ENCODE measurements at regions of chr9 and their contacts with region 1.

Region 1: GRCh38 chr9:132575005-132575609 is 7.3 kb upstream of the BARHL1 start:
- DNase-seq: peak; percentile 87
- H3K4me3 ChIP-seq: no peak overlapping the region
- H3K27ac ChIP-seq: no peak overlapping the region
- H3K4me1 ChIP-seq: peaks cover 0 to 7% (median 0%) of the 10 kb centered on the region in 6 donors
- H3K27me3 ChIP-seq: peaks cover 0 to 79% (median 26%) of the 10 kb centered on the region in 7 donors
- CTCF ChIP-seq: peak; percentile 31 to 81 (median 69)
- POLR2A ChIP-seq: no peak

Region 2: DNA sequence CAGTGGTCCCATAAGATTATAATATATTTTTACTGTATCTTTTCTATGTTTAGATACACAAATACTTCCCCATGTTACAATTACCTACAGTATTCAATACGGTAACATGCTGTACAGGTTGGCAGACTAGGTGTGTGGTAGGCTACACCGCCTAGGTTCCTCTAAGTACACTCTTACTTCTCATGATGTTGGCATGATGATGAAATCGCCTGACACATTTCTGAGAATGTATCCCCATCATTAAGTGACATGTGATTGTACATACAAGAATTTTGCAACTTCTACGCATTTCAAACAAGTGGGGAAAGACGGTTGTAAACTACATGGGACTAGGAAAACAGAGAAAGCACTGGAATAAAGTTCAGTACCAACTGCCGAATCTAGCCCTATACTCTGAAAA is 273.6 kb before region 1 on chr9:
- intact Hi-C with region 1: no loop called
- DNase-seq: no peak
- H3K4me3 ChIP-seq: no peak overlapping the region
- H3K27ac ChIP-seq: no peak overlapping the region
- H3K4me1 ChIP-seq: peaks cover 0 to 31% (median 0%) of the 10 kb centered on the region in 6 donors
- H3K27me3 ChIP-seq: no peaks in the 10 kb centered on the region
- CTCF ChIP-seq: no peak
- POLR2A ChIP-seq: no peak

Region 3: DNA sequence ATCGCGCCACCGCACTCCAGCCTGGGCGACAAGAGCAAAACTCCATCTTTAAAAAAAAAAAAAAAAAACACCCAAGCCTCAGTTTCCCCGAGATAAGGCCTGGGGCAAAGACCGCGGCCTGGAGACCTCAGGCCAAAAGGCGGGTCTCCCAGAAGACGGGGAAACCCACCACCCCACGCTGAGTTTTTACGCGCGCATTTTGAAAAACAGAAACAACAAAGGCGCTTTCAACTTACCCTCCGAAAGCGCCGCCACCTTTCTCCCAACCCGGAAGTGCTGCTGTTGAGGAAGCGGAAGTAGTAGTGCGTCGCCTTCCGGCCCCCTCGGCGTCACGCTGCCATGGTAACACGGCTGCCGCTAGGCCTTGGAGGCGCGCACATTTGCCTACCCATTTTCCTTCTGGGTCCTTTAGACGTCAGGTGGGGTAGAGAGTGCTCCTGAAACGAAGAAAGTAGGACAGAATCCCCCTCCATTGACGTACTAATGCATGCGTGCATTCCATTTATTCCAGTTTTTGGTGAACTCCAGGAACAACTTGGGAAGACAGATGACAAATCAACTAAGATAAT is 168.5 kb before region 1 on chr9 and contains the start of gene TTF1:
- intact Hi-C with region 1: loop called (anchors 5 kb)
- DNase-seq: peak; percentile 97
- H3K4me3 ChIP-seq: peak within 1 kb of the TSS; percentile 82 to 98 (median 87)
- H3K27ac ChIP-seq: peak within 1 kb of the TSS in 6 of 8 donors; percentile 43 to 83 (median 75)
- H3K4me1 ChIP-seq: peaks cover 45 to 71% (median 63%) of the 10 kb centered on the region in 6 donors
- H3K27me3 ChIP-seq: peaks cover 0 to 26% (median 19%) of the 10 kb centered on the region in 7 donors
- CTCF ChIP-seq: no peak
- POLR2A ChIP-seq: peak in 2 of 3 donors; percentile 22 to 26
- total RNA-seq, gene TTF1: 12.1 to 18.5 (median 14.6) TPM

Region 4: GRCh38 chr9:132507746-132508469 is 67.2 kb before region 1 on chr9:
- intact Hi-C with region 1: loop called (anchors 2 kb)
- DNase-seq: peak; percentile 78
- H3K4me3 ChIP-seq: no peak overlapping the region
- H3K27ac ChIP-seq: no peak overlapping the region
- H3K4me1 ChIP-seq: peaks cover 2 to 18% (median 10%) of the 10 kb centered on the region in 6 donors
- H3K27me3 ChIP-seq: peaks cover 0 to 52% (median 0%) of the 10 kb centered on the region in 7 donors
- CTCF ChIP-seq: peak; percentile 47 to 85 (median 78)
- POLR2A ChIP-seq: no peak